ENCODE measurements at regions of chr6 and their contacts with region 1.

Region 1: DNA sequence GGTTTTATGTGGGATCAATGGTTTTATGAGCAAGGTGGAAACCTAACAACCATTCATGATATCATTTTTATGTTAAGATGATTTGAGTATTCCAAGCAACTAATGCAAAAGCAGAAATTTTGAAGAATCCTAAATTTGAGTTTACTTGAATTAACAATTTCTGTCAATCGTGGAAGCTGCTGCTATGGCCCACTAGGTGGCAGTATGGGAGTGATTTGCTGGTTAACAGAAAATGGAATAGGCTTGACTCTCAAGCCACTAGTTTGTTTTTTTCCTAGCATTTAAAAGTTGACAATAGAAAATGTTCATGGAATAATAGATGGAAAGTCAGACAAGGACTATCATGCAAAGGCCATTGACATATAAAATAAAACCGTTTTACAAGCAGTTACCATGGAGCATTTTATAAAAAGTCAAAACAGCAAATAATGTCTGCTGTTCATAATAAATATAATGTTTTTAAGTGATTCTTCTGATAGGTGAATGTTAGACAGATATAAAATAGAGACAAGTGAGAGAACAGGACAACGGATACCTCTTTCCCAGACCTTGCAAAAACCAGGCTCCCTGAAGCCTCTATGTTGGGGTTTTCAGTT is 43.0 kb upstream of the TMEM200A start:
- DNase-seq: peak; percentile 85
- H3K4me3 Mint-ChIP-seq: no peak overlapping the region
- H3K27ac Mint-ChIP-seq: no peak overlapping the region
- H3K4me1 Mint-ChIP-seq: peaks cover 12% of the 10 kb centered on the region
- H3K27me3 Mint-ChIP-seq: peaks cover 21% of the 10 kb centered on the region

Region 2: DNA sequence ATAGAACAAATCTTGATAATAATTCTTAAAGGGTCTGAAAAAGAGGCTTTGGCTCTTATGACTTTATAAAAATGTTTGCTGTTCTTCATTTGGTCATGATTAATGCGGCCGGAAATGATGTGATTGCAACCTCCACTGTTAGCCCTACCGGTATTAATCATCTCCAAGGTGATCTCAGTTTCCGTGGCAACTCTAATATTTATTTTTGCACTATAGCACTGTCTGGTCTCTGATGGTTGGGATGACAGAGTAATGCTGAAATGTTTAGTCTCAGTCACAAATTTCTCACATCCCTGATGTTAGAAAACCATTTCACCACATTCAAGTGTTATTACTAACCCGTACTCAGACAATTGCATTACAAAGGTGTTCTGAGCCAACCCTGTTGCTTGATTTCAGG is 130.5 kb after region 1 on chr6:
- intact Hi-C with region 1: no loop called
- DNase-seq: no peak
- H3K4me3 Mint-ChIP-seq: no peak overlapping the region
- H3K27ac Mint-ChIP-seq: no peak overlapping the region
- H3K4me1 Mint-ChIP-seq: no peaks in the 10 kb centered on the region
- H3K27me3 Mint-ChIP-seq: peaks cover 3% of the 10 kb centered on the region

Region 3: GRCh38 chr6:130760006-130760405 is 437.2 kb after region 1 on chr6:
- intact Hi-C with region 1: loop called (anchors 10 kb)
- DNase-seq: peak; percentile 61
- H3K4me3 Mint-ChIP-seq: no peak overlapping the region
- H3K27ac Mint-ChIP-seq: no peak overlapping the region
- H3K4me1 Mint-ChIP-seq: peaks cover 8% of the 10 kb centered on the region
- H3K27me3 Mint-ChIP-seq: peaks cover 9% of the 10 kb centered on the region

Region 4: GRCh38 chr6:130872250-130873095 is 549.7 kb after region 1 on chr6:
- intact Hi-C with region 1: loop called (anchors 2 kb)
- DNase-seq: peak; percentile 91
- H3K4me3 Mint-ChIP-seq: no peak overlapping the region
- H3K27ac Mint-ChIP-seq: no peak overlapping the region
- H3K4me1 Mint-ChIP-seq: peaks cover 2% of the 10 kb centered on the region
- H3K27me3 Mint-ChIP-seq: peaks cover 3% of the 10 kb centered on the region